HCT116 (cell line): ENCODE measurements at regions of chr5 and their contacts with region 1.

Region 1: GRCh38 chr5:81751009-81751835 is at the start of gene SSBP2:
- DNase-seq: peak; percentile 96
- ATAC-seq: peak; percentile 89
- H3K4me3 ChIP-seq: peak within 1 kb of the TSS; percentile 50 to 62
- H3K27ac ChIP-seq: peak within 1 kb of the TSS; percentile 86
- H3K4me1 ChIP-seq: peaks cover 13 to 22% of the 10 kb centered on the region in 2 experiments
- H3K27me3 ChIP-seq: peaks cover 25% of the 10 kb centered on the region
- CTCF ChIP-seq: no peak
- POLR2A ChIP-seq: peak; percentile 38
- RAD21 ChIP-seq: peak; percentile 54
- total RNA-seq, gene SSBP2: 5.2 TPM

Region 2: DNA sequence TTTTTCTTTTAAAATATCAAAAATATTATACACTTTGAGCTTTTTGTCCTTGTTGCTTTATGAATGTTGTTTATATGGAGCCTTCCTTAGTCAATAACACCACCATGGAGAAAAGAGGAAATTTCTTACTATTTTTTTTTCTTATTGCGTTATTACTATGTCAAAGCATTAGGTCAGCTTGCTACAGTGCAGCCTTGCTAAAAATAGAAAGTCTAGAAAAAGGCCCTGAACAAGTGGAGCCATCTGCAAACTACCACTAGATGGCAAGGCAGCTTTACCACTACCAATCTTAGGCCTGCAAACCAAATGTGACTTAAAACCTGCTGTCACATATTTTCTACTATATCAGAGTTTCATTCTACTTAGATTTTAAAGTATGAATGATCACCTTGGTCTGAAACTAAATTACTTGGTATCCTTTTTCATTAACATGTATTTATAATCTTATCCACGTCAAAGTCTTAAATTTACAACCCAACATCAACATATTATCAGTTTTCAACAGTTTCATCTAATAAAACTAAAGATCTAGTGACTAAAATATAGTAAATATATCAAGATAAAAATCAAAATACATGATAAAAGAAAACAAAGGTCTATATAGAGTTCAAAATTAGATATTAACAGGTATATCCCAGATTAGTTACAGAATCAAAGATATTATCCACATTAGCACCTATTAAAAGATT is 244.2 kb before region 1 on chr5:
- CTCF ChIA-PET with region 1: interaction called, 4 read pairs
- POLR2A ChIA-PET with region 1: no interaction called
- RAD21 ChIA-PET with region 1: no interaction called
- intact Hi-C with region 1: loop called (anchors 2 kb)
- DNase-seq: peak; percentile 77
- ATAC-seq: peak; percentile 99
- H3K4me3 ChIP-seq: no peak overlapping the region
- H3K27ac ChIP-seq: no peak overlapping the region
- H3K4me1 ChIP-seq: peaks cover 0 to 5% of the 10 kb centered on the region in 2 experiments; a peak in 2 of 4 replicates
- H3K27me3 ChIP-seq: no peaks in the 10 kb centered on the region
- CTCF ChIP-seq: peak; percentile 76 to 91 (median 84)
- POLR2A ChIP-seq: no peak
- RAD21 ChIP-seq: peak; percentile 92

Region 3: DNA sequence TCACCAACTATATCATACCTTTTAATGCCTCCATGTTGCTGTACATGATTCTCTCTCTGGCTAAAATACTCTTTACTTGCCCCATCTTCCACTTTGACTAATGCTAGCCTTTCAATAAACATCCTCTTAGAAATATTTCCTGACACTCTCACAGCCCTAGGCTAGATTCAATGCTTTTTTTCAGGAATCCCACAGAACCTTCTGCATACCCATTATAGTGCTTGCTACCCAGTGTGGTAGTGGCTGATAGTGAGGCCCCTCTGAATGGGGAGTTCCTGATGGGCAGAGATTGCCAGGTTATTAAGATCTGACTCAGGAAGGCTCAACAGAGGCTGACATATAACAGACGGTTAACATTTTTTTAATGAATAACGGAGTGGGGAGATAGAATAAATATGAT is 11.9 kb before region 1 on chr5:
- CTCF ChIA-PET with region 1: no interaction called
- POLR2A ChIA-PET with region 1: no interaction called
- RAD21 ChIA-PET with region 1: no interaction called
- intact Hi-C with region 1: no loop called
- DNase-seq: no peak
- ATAC-seq: no peak
- H3K4me3 ChIP-seq: no peak overlapping the region
- H3K27ac ChIP-seq: no peak overlapping the region
- H3K4me1 ChIP-seq: no peaks in the 10 kb centered on the region
- H3K27me3 ChIP-seq: no peaks in the 10 kb centered on the region
- CTCF ChIP-seq: no peak
- POLR2A ChIP-seq: no peak
- RAD21 ChIP-seq: no peak

Region 4: DNA sequence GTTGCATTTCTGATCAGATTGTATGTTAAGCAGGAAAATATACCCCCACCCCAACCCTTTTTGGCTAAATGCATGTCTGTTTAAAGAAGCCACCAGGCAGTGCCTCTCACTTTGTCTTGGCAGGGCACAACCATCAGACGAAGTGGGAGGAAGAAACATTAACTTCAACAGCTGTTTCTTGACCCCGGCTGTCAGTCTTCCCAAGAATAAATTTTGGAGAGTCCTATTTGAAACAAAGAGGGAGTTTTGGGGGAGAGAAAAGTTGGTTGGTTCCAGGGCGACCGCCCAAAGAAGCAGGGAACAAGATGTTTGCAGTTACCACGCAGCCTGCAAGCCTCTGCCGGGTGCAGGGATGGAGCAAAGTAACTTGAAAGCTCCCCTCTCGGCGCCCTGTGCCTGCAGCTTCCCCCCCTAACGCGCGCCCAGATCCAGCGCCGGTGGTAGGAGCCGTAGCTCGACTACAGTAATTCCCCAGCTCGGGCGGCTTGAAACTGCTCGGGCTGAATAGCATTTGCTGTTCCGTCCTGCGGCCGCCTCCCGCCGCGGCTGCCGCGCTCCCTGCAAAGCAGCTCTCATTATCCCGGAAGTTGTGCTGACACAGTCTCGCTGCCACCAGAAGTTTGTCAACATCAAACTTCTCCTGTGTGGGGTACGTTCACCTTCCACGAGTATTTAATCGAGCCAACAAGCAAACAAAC is 100.4 kb after region 1 on chr5:
- CTCF ChIA-PET with region 1: interaction called, 32 read pairs
- POLR2A ChIA-PET with region 1: interaction called, 31 read pairs
- RAD21 ChIA-PET with region 1: interaction called, 24 to 35 read pairs
- intact Hi-C with region 1: loop called (anchors 1 kb)
- DNase-seq: peak; percentile 84
- ATAC-seq: peak; percentile 82
- H3K4me3 ChIP-seq: peak overlapping the region; percentile 42 to 56
- H3K27ac ChIP-seq: peak overlapping the region; percentile 81
- H3K4me1 ChIP-seq: peaks cover 40 to 52% of the 10 kb centered on the region in 2 experiments
- H3K27me3 ChIP-seq: no peaks in the 10 kb centered on the region
- CTCF ChIP-seq: no peak
- POLR2A ChIP-seq: peak; percentile 47
- RAD21 ChIP-seq: peak; percentile 35

Region 5: GRCh38 chr5:81909677-81910076 is 158.5 kb after region 1 on chr5:
- CTCF ChIA-PET with region 1: no interaction called
- POLR2A ChIA-PET with region 1: no interaction called
- RAD21 ChIA-PET with region 1: no interaction called
- intact Hi-C with region 1: no loop called
- DNase-seq: no peak
- ATAC-seq: no peak
- H3K4me3 ChIP-seq: no peak overlapping the region
- H3K27ac ChIP-seq: no peak overlapping the region
- H3K4me1 ChIP-seq: no peaks in the 10 kb centered on the region
- H3K27me3 ChIP-seq: no peaks in the 10 kb centered on the region
- CTCF ChIP-seq: no peak
- POLR2A ChIP-seq: no peak
- RAD21 ChIP-seq: no peak

Region 6: DNA sequence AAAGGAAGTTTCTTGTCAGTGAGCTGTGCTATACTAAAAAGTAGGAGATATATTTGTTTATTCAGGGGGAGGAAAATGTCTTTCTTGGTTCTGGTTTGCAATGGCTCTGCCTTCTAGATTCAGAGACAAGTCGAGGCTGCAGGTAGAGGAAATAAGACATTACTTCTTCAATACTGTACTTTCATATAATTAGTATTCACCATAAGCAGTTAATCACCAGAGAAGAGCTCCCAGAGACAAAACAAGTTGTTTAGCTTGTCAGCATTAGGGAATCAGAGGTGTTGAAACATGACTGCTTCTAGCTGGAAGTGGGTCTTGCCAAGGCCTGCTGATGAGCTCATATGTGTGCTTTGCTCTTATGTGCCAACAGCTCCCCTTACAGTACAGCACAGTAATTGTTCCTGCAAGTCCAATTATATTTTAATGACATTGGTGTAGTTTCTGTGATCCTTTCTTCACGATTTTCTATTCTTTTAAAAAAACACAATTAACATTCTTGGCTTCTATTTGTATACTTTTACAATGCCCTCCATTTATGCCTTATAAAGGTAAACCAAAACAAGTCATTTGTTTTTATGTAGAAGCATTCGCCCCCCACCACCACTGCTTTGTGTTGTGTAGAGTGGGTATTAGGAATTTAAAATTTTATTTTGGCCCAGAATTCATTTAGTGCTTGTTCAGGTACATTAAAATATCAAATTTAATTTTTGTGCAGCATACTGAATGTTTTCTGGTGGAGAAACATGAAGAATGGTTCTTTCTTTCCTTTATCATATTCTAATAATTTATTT is 414.7 kb after region 1 on chr5:
- CTCF ChIA-PET with region 1: interaction called, 6 read pairs
- POLR2A ChIA-PET with region 1: interaction called, 4 read pairs
- RAD21 ChIA-PET with region 1: interaction called in 1 of 2 experiments, 4 read pairs
- intact Hi-C with region 1: loop called (anchors 2 kb)
- DNase-seq: peak; percentile 59
- ATAC-seq: peak; percentile 93
- H3K4me3 ChIP-seq: no peak overlapping the region
- H3K27ac ChIP-seq: no peak overlapping the region
- H3K4me1 ChIP-seq: no peaks in the 10 kb centered on the region
- H3K27me3 ChIP-seq: no peaks in the 10 kb centered on the region
- CTCF ChIP-seq: peak; percentile 51 to 73 (median 67)
- POLR2A ChIP-seq: no peak
- RAD21 ChIP-seq: peak; percentile 88